ENCODE measurements at regions of chr1 and their contacts with region 1.

Region 1: DNA sequence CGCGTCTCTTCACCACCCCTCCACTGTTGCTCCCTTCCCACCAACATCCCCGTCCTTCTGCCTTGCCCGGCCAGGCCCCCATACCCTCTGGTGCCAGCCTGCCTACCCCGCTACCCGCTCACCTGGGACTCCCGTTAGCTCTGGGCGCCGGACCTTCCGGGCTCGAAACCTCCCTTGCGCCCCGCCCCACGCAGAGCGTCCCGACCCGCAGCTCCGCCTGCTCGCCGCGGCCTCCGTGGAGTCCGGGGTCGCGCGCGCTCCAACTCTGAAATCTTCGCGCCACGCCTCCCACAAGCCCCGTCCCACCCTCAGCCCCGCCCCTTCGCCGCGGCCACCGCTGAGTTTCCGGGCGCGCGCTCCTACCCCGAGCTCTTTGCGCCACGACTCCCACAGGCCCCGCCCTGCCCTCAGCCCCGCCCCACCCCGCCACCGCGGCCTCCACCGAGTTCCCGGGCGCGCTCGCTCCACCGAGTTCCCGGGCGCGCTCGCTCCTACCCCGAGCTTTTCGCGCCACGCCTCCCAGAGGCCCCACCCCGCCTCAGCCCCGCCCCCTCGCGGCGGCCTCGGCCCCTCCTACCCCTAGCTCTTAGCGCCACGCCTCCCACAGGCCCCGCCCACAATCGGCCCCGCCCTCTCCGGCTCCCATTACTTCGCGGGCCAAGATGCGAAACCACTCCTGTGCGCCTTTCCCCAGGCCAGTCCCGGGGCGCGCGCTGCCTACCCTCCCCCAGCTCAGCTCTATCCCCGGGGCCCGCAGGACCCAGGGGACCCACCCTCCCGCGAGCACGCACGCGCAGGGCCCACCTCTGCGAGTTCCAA is at the start of gene IFT25:
- DNase-seq: peak; percentile 90
- H3K4me3 ChIP-seq: peak within 1 kb of the TSS; percentile 63
- H3K27ac ChIP-seq: peak within 1 kb of the TSS; percentile 78
- H3K4me1 ChIP-seq: peaks cover 4% of the 10 kb centered on the region
- H3K27me3 ChIP-seq: no peaks in the 10 kb centered on the region
- CTCF ChIP-seq: no peak
- total RNA-seq, gene IFT25: 34.7 and 41.0 TPM in 2 replicates

Region 2: DNA sequence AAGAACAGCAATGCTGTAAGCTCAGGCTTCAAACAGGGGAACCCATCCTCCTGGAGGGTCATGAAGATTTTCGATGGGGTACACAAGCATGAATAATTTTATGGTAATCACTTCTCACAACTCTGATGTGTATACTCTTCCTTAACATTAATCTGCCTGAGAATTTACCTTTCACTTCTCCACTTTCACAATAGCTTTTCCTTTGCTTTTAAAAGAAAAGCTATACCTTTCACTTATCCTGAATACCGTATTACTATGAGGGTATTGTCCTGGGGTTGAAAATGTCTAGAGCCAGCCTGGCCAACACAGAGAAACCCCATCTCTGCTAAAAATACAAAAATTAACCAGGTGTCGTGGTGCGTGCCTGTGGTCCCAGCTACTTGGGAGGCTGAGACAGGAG is 1232.1 kb before region 1 on chr1:
- CTCF ChIA-PET with region 1: interaction called, 12 read pairs
- POLR2A ChIA-PET with region 1: no interaction called
- intact Hi-C with region 1: no loop called
- DNase-seq: no peak
- H3K4me3 ChIP-seq: no peak overlapping the region
- H3K27ac ChIP-seq: no peak overlapping the region
- H3K4me1 ChIP-seq: no peaks in the 10 kb centered on the region
- H3K27me3 ChIP-seq: no peaks in the 10 kb centered on the region
- CTCF ChIP-seq: no peak

Region 3: DNA sequence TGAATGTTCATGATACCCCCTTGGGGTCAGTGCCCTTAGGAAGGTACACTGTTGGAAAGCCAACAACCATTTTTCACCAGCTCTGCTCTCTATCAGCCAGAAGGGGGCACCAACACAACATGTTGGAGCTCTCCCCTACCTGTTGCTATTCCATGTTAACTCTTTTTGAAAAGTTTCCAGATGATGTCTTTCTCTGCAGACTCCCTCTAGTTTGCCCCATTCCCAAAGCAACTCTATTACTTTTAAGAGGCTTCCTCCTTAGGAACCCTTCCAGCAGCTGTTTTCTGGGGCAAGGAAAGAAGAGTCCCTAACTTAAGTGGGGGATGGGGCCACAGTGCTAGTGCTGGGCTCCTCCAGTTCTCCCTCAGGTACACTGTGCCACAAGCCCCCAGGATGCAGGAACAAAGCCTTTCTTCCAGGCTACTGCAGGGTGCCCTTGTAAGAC is 84.7 kb before region 1 on chr1:
- CTCF ChIA-PET with region 1: interaction called, 5 read pairs
- POLR2A ChIA-PET with region 1: no interaction called
- intact Hi-C with region 1: loop called (anchors 1 kb)
- DNase-seq: peak; percentile 55
- H3K4me3 ChIP-seq: no peak overlapping the region
- H3K27ac ChIP-seq: no peak overlapping the region
- H3K4me1 ChIP-seq: peaks cover 6% of the 10 kb centered on the region
- H3K27me3 ChIP-seq: no peaks in the 10 kb centered on the region
- CTCF ChIP-seq: peak; percentile 66

Region 4: GRCh38 chr1:53878492-53879105 is 67.0 kb before region 1 on chr1:
- CTCF ChIA-PET with region 1: interaction called, 4 read pairs
- POLR2A ChIA-PET with region 1: no interaction called
- intact Hi-C with region 1: loop called (anchors 5 kb)
- DNase-seq: peak; percentile 12
- H3K4me3 ChIP-seq: no peak overlapping the region
- H3K27ac ChIP-seq: no peak overlapping the region
- H3K4me1 ChIP-seq: no peaks in the 10 kb centered on the region
- H3K27me3 ChIP-seq: no peaks in the 10 kb centered on the region
- CTCF ChIP-seq: peak; percentile 62

Region 5: GRCh38 chr1:54212872-54213271 is 267.2 kb after region 1 on chr1:
- CTCF ChIA-PET with region 1: no interaction called
- POLR2A ChIA-PET with region 1: no interaction called
- intact Hi-C with region 1: no loop called
- DNase-seq: no peak
- H3K4me3 ChIP-seq: no peak overlapping the region
- H3K27ac ChIP-seq: no peak overlapping the region
- H3K4me1 ChIP-seq: no peaks in the 10 kb centered on the region
- H3K27me3 ChIP-seq: no peaks in the 10 kb centered on the region
- CTCF ChIP-seq: no peak

Region 6: GRCh38 chr1:55088413-55088812 is 1142.8 kb after region 1 on chr1:
- CTCF ChIA-PET with region 1: no interaction called
- POLR2A ChIA-PET with region 1: interaction called, 15 read pairs
- intact Hi-C with region 1: no loop called
- DNase-seq: no peak
- H3K4me3 ChIP-seq: no peak overlapping the region
- H3K27ac ChIP-seq: no peak overlapping the region
- H3K4me1 ChIP-seq: no peaks in the 10 kb centered on the region
- H3K27me3 ChIP-seq: no peaks in the 10 kb centered on the region
- CTCF ChIP-seq: no peak